Posterior vena cava (tissue), 2 donors: ENCODE measurements at regions of chr6 and their contacts with region 1.

Region 1: GRCh38 chr6:145814501-145815308 is at the start of gene FBXO30:
- DNase-seq: peak; percentile 96
- total RNA-seq, gene FBXO30: 17.4 to 19.0 TPM

Region 2: DNA sequence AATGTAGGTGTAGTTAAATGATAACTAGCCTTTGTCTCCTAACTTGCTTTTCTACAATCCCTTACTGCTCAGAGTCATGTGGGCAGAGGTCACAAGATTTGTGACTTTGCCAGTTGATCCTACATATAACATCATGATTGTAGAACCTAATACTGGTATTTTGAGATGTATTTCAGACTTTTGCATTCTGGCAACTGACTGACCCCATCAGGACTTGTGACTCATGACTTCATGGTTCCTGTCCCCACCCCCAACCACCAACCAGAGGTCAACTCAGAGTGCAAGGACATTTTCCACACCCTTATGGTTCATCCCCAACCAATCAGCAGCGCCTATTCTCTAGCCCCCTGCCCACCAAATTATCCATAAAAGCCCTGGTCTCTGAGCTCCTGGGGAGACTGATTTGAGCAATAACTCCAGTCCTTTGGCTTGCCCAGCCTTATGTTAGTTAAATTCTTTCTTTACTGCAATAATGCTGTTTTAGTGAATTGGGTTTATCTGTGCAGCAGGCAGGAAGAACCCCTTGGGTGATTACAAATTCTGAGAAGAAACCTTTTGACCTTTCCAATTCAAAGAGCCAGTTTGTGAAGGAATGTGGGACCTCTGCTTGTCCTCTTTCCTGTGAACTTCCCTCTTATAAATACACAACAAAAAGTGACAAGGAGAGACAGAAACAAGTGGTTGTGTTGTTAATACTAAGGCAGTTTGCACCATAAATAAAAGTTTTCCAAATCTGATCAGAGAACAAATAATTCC is 940.9 kb before region 1 on chr6:
- intact Hi-C with region 1: no loop called
- DNase-seq: no peak

Region 3: DNA sequence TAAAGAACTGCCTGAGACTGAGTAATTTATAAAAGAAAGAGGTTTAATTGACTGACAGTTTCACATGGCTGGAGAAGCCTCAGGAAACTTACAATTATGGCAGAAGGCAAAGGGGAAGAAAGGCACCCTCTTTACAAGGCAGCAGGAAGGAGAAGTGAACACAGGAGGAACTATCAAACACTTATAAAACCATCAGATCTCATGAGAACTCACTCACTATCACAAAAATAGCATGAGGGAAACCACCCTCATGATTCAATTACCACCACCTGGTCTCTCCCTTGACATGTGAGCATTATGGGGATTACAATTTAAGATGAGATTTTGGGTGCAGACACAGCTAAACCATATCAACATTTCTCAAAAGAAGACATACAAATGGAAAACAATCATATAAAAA is 345.7 kb before region 1 on chr6:
- intact Hi-C with region 1: no loop called
- DNase-seq: no peak

Region 4: GRCh38 chr6:145734486-145735355 is 80.0 kb before region 1 on chr6:
- intact Hi-C with region 1: loop called (anchors 2 to 10 kb)
- DNase-seq: peak; percentile 97